ENCODE measurements at regions of chr12 and their contacts with region 1.

Region 1: DNA sequence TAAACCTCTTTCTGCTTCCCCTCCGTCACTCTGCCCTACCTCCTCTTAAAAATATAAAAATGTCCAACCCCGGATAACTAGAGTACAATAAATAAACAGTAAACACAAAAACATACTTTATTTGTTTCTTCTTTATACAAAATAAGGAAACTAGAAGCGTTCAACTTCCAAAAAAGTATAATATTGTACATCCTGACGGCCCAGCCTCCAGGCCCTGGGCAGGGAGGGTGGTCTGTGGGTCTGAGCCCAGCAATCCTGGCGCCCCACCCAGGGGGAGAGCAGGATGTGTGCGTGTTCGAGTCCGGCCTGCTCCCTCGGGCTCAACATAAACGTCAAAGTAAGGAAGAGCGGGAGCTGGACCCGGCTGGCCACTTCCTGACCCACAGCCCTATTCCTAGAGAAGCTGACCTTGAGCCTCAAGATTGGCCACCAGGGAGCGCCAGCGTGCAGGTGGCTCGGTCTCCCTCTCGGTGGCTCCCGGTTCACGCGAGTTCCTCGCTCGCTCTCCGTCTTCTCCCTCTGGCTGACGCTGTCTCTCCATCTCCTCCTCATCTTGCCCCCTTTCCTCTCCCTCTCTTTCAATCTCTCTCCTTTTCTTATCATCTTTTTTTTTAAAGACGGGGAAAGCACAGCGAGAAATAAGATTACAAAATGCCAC is 9.4 kb downstream of the LHX5 start:
- DNase-seq: peak; percentile 80

Region 2: GRCh38 chr12:113267621-113268395 is 194.4 kb before region 1 on chr12:
- CTCF ChIA-PET with region 1: no interaction called
- POLR2A ChIA-PET with region 1: no interaction called
- DNase-seq: no peak

Region 3: DNA sequence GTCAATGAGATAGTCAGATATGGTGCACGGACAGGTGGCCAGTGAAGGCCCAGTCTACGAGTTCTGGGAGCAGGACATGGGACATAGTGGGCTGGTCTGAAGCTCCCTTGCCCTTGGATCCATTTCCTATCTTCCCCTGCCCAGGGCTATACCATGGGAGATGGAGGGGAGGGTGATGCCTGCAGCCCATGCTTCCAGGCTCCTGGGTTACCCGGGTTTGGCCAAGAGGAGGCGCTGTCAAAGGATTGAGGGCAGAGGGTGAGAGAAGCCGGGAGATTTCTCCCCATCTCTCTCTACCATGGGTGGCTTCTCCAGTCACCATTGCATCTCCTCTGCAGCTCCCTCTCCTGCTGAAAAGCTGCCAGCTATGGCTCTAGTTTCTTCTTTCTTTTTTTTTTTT is 62.2 kb after region 1 on chr12:
- CTCF ChIA-PET with region 1: interaction called, 11 read pairs
- POLR2A ChIA-PET with region 1: no interaction called
- DNase-seq: no peak